Heart left ventricle (tissue), 16 donors: ENCODE measurements at regions of chr1 and their contacts with region 1.

Region 1: DNA sequence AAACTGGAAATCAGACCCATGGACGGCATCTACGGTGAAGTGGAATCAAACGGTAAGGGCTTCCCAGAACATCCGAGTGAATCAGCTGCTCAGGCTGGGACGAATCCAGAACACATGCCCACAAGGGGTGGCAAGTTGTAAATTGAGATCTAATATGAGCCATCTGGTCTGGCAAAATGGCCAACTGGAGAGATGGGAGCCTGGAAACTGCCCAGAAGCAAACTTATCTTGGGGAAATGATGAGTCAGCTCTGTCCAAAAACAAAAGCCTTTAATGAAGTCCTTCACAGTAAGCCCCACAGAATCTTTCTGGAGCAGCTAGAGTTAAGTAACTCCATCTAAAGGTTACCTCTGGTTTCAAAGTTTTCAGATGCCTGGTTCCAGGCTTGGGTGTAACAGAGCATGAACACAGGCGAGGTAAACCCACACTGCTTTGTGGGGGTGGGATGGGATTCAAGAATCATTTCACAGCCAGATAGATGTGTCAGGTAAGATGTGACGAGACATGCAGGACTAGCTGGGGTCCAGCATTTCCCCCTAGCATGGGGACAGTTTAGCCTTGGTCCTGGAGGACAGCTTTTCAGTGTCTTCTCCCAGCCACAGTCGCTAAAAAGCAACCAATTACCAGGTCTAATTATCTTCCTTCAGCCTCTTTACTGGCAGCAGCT is 10.5 kb upstream of the SRP9 start:
- DNase-seq: peak in 4 of 5 donors; percentile 40 to 70 (median 57)
- ATAC-seq: peak; percentile 32 to 65 (median 54)
- H3K4me3 ChIP-seq: no peak overlapping the region
- H3K27ac ChIP-seq: peak overlapping the region; percentile 55 to 89 (median 79)
- H3K4me1 ChIP-seq: peaks cover 8 to 87% (median 63%) of the 10 kb centered on the region in 12 donors
- H3K27me3 ChIP-seq: no peaks in the 10 kb centered on the region
- CTCF ChIP-seq: no peak
- POLR2A ChIP-seq: no peak

Region 2: GRCh38 chr1:225480825-225481434 is 286.2 kb before region 1 on chr1:
- intact Hi-C with region 1: loop called in 4 of 10 experiments (anchors 2 to 5 kb)
- DNase-seq: no peak
- ATAC-seq: peak in 3 of 4 donors; percentile 43 to 63 (median 50)
- H3K4me3 ChIP-seq: no peak overlapping the region
- H3K27ac ChIP-seq: no peak overlapping the region
- H3K4me1 ChIP-seq: peaks cover 0 to 9% (median 0%) of the 10 kb centered on the region in 12 donors
- H3K27me3 ChIP-seq: no peaks in the 10 kb centered on the region
- CTCF ChIP-seq: peak; percentile 42 to 71 (median 60)
- POLR2A ChIP-seq: no peak

Region 3: DNA sequence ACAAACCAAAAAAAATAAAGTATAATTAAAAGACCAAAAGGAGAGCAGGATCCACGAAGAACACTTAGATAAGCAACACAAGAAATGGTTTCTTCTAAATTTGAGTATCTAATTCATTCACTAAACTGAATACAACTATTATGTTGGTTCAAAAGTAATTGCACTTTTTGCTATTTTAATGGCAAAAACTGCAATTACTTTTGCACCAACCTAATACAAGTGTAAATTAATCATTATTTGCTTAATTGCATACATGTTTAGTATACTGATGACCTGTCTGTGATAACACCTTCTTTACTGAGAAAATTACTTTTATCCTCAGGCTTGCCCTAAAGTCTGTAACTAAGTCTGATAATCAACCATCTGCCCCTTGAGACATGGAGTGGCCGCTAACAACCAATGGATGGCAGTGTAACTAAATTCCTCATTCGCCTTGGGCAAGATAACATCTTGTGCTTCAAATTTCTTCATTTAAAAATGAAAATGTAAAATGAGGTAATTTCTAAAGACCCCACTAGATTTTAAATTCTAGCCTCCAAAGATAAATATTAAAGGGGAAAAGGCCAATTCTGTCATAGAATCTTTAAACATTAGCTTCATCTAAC is 199.4 kb before region 1 on chr1:
- intact Hi-C with region 1: loop called in 1 of 10 experiments (anchors 5 kb)
- DNase-seq: no peak
- ATAC-seq: no peak
- H3K4me3 ChIP-seq: no peak overlapping the region
- H3K27ac ChIP-seq: no peak overlapping the region
- H3K4me1 ChIP-seq: peaks cover 0 to 46% (median 2%) of the 10 kb centered on the region in 12 donors
- H3K27me3 ChIP-seq: no peaks in the 10 kb centered on the region
- CTCF ChIP-seq: peak in 5 of 12 donors; percentile 9 to 41 (median 22)
- POLR2A ChIP-seq: no peak